GM23248 (cell line): ENCODE measurements at regions of chr1 and their contacts with region 1.

Region 1: GRCh38 chr1:35715568-35716002 is 3.1 kb downstream of the C1orf216 start:
- DNase-seq: peak; percentile 77
- H3K4me3 ChIP-seq: no peak overlapping the region
- H3K27ac ChIP-seq: no peak overlapping the region
- H3K4me1 ChIP-seq: peaks cover 14% of the 10 kb centered on the region
- H3K27me3 ChIP-seq: no peaks in the 10 kb centered on the region

Region 2: DNA sequence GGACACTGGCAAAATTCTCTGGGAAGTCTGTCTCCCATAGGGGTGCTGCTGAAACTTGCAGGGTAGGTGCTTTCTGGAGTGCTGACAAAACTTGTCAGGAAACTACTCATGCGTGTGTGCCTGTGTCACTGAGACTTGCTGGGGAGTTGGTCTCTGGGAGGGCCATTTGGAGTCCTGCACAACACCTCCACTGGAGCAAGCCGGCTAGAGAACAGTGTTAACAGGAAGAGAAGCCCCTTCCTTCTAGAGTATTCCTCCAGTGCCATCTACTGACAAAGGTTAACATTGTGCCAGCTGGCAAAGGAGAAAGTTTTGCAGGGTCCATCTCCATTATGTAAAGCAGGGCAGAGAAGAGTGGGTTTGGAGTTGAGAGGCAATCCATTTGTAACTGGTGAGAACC is 417.1 kb before region 1 on chr1:
- in situ Hi-C with region 1: no loop called
- DNase-seq: peak; percentile 68
- H3K4me3 ChIP-seq: no peak overlapping the region
- H3K27ac ChIP-seq: no peak overlapping the region
- H3K4me1 ChIP-seq: no peaks in the 10 kb centered on the region
- H3K27me3 ChIP-seq: no peaks in the 10 kb centered on the region

Region 3: GRCh38 chr1:35451125-35451528 is 264.5 kb before region 1 on chr1:
- in situ Hi-C with region 1: loop called (anchors 10 kb)
- DNase-seq: peak; percentile 87
- H3K4me3 ChIP-seq: no peak overlapping the region
- H3K27ac ChIP-seq: no peak overlapping the region
- H3K4me1 ChIP-seq: peaks cover 55% of the 10 kb centered on the region
- H3K27me3 ChIP-seq: no peaks in the 10 kb centered on the region

Region 4: DNA sequence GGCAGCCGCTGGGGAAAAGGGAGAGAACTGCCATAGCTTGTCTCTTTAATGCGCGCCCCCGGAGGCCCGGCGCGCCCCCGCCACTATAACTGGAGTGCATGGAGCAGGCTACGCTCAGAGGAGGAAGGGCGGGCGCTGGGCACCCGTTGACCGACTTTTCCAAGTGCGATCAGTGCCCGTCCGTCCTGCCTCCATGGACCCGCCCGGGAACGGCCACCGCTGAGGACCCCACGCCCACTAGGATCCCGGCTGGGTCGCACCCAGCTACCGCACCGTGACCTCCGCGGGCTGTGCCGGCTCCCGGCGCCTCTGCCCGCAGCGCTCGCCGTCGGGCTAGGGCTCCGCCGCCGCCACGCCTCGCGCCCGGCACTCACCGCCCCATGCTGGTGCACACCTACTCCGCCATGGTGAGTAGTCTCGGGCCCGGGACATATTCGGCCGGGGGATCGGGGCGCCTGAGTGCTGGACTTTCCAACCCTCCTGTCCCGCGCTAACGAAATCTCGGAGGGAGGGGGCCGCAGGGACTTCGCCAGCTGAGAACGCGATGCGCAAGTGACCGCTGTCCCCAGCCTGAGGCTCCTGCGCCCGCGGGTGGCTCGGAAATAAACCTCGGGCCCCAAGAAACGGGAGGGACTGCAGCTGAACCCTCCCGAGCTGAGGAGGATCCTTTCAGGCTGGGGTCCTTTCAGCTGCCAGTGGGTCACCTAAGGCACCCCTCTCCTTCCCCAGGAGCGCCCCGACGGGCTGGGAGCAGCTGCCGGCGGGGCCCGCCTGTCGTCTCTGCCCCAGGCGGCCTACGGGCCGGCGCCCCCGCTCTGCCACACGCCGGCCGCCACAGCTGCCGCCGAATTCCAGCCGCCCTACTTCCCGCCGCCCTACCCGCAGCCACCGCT is 142.1 kb before region 1 on chr1 and contains the start of gene TFAP2E:
- in situ Hi-C with region 1: loop called (anchors 5 kb)
- DNase-seq: peak; percentile 72
- H3K4me3 ChIP-seq: peak within 1 kb of the TSS; percentile 81
- H3K27ac ChIP-seq: no peak within 1 kb of the TSS
- H3K4me1 ChIP-seq: peaks cover 13% of the 10 kb centered on the region
- H3K27me3 ChIP-seq: no peaks in the 10 kb centered on the region
- total RNA-seq, gene TFAP2E: not detected in 2 replicates

Region 5: DNA sequence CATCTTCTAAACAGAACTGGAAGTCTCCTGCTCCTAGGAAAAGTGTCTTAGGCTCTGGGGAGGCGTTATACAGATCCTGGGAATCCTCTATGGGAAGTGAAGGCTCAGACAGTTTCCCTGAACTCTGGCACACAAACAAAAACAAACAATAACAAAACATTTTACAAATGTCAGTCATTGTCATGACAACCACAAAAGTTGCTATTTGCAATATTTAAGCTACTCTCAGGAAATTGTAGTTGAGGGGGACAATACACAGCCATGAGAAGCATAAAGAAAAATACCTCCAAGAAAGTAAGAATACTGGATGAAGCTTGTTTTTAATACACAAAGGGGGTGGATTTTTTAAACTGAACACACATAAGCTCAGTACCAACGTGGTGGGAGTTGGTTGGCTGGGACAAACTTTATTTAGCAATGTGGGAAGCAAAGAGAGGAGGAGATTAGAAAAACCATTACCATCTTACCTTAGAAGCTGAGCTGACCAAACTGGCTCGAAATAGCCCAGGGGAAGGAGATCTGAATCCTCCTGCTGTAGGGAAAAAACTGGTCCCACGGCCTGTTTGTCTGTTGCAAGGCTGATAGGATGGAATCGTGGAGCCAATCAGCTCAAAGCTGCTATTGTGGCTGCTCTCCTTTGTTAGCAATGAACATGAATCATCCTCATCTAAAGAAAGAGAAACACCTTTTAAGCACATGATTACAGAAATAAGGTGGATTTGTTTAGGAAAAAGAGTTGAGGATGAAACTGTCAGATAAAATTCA is 32.5 kb after region 1 on chr1:
- in situ Hi-C with region 1: no loop called
- DNase-seq: no peak
- H3K4me3 ChIP-seq: no peak overlapping the region
- H3K27ac ChIP-seq: no peak overlapping the region
- H3K4me1 ChIP-seq: no peaks in the 10 kb centered on the region
- H3K27me3 ChIP-seq: no peaks in the 10 kb centered on the region